AG04450 (cell line): ENCODE measurements at regions of chr6 and their contacts with region 1.

Region 1: DNA sequence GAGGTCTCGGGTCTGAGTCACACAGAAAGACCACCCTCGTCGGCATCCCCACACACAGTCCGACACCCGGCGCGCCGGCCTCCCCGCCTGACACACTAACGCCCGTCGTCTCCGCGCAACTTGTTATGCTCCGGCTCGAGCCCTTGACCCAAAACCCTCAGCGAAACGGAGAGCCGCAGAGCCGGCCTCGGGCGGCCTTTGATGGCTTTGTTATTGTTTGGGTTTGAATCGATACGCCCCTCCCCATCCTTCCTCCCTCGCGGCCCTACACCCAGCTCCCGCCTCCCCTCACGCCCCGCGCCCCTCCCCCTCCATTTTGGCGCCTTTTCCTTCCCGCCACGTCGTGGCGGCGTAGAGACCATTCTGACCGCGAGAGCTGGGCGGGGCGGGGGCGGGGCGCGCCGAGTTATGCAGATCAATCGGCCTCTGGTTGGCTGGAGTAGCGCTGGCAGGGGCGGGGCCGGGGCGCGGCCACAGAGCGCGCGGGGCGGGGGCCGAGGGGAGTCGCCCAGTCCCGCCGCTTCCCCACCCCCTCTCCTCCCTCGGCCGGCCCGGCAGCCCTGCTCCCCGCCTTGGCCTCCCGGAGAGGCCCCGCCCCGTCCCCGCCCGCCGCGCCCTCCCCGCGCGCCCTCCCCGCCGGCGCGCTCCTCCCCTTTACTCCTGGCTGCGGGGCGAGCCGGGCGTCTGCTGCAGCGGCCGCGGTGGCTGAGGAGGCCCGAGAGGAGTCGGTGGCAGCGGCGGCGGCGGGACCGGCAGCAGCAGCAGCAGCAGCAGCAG is at the start of gene PIM1:
- DNase-seq: peak; percentile 95
- H3K4me3 ChIP-seq: peak within 1 kb of the TSS; percentile 95
- H3K27ac ChIP-seq: peak within 1 kb of the TSS; percentile 99
- H3K27me3 ChIP-seq: no peaks in the 10 kb centered on the region
- CTCF ChIP-seq: no peak
- polyA plus RNA-seq, gene PIM1: 35.3 and 37.5 TPM in 2 replicates

Region 2: DNA sequence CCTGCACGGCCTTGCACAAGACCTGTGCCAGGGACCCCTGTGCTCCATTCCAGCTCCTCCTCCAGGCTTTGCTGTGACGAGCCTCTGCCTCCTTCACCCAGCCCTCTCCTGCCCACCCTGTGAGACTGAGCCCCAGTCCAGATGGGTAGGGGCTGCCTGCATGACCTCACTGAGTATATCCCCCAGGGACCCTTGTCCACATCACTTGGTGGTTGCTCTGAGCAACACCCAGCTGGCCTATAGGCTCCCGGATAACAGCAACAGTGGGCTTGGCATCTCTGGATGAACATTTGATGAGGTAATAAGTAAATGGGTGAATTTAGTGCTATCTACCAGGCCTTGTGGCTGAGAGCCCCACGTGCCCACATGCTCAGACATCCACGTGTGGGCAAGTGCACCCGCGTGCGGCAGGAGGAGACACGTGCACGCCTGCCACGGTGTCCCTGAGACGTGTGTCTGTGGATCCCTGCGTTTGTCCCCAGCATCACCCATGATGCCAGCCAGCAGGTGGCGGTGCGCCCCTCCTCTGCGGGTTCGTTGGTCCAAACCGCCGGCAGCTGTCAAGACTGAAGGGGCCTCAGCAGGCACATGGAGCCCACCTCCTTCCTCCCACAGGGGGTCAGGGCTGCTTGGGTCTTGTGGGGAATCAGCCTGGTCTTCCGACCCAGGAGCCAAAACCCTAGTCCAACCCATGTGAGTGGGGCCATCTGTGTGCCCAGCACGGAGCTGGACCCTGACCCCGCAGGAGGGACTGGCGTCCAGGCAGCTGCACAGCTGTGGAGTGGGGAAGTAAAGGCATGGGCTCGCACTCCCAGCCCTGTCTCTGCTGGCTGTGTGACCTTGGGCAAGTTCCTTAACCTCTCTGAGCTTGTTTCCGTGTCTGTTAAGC is 118.3 kb before region 1 on chr6:
- CTCF ChIA-PET with region 1: interaction called, 60 read pairs
- POLR2A ChIA-PET with region 1: interaction called, 20 read pairs
- DNase-seq: no peak
- H3K4me3 ChIP-seq: no peak overlapping the region
- H3K27ac ChIP-seq: no peak overlapping the region
- H3K27me3 ChIP-seq: no peaks in the 10 kb centered on the region
- CTCF ChIP-seq: peak; percentile 91

Region 3: DNA sequence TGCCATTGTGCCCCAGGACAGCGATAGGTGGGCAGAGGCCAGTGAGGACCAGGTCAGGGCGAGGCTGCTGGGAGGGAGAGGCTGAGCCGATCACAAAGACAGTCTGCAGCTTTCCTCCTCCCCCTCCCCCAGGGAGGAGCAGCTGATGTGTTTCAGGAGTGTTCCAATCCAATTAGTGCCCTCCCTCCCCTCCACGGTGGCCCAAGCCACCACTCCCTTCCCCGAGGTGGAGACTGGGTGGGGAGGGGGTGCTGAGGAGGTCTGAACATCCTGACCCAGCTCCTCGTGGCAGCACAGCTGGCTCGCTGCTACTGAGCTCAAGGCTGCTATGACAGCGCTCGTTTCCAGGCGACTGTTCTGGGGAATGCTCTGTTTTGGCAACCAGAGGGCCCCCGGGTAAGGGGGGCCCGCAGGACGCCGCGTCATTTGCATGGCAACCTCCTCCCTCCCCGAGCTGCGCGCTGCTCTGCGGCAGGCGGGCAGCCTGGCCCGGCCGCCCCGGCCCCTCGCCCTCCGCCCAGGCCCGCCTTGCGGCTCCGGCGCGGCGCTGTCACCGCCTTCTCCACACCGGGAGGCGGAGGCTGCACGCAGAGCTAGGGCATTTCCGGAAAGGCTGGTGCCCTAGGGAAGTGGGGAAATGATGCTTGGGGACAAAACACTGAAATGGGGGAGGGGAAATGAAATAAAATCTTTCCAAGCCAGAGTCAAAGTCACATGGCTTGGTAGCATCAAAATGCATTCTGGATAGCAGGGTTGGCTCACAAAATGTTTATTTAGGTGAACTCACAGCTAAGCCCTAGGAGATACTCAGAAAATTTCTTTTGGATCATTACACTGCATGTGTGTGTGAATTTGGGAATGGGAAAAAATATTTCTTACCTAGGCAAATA is 67.2 kb before region 1 on chr6:
- CTCF ChIA-PET with region 1: interaction called, 3 read pairs
- POLR2A ChIA-PET with region 1: interaction called, 10 read pairs
- DNase-seq: no peak
- H3K4me3 ChIP-seq: peak overlapping the region; percentile 53
- H3K27ac ChIP-seq: peak overlapping the region; percentile 65
- H3K27me3 ChIP-seq: no peaks in the 10 kb centered on the region
- CTCF ChIP-seq: no peak

Region 4: DNA sequence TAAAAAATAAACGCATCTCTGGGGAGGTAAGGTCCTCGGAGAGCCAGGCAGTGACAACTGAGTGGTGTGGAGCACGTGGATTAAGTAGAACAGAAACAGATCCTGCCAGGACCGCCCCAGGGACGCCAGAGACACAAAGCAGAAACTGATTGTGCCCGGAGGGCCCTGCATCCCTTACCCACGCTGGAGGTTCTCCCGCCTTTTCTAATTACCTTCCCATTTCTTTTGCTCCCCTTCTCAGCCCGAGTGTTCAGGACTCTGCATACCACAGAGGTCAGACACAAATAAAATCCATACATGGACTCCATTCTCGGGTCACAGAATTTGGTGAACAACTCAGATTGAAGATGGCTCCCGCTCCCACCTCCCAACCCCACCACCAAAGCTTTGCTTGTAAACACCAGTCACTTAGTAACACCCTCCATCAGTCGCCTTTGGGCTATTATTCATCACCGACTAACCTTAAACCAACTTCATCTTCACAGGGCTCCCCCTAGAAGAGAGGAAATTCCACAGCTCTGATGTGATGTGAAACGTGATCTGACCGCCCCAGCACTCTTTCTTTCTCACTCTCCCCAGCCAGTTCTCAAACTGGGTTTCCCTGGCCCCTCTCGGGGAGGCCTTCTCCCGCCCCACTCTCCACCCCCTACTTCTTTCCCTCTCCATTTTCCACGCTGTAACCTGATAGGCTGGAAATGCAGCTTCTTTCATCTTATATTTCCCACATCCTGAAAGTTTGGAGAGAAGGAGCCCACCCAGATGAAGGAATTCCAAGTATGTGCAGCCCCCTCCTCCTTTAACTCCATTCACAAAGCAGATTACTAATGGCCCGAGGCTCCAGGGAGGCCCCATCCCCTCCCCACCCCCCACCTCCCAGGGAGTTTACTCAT is 32.2 kb before region 1 on chr6:
- CTCF ChIA-PET with region 1: interaction called, 5 read pairs
- POLR2A ChIA-PET with region 1: interaction called, 12 read pairs
- DNase-seq: peak; percentile 93
- H3K4me3 ChIP-seq: peak overlapping the region; percentile 36
- H3K27ac ChIP-seq: peak overlapping the region; percentile 92
- H3K27me3 ChIP-seq: no peaks in the 10 kb centered on the region
- CTCF ChIP-seq: no peak

Region 5: GRCh38 chr6:37180075-37180474 is 10.4 kb after region 1 on chr6:
- CTCF ChIA-PET with region 1: no interaction called
- POLR2A ChIA-PET with region 1: no interaction called
- DNase-seq: no peak
- H3K4me3 ChIP-seq: no peak overlapping the region
- H3K27ac ChIP-seq: no peak overlapping the region
- H3K27me3 ChIP-seq: no peaks in the 10 kb centered on the region
- CTCF ChIP-seq: no peak

Region 6: GRCh38 chr6:37207903-37208456 is 38.3 kb after region 1 on chr6:
- CTCF ChIA-PET with region 1: interaction called, 43 read pairs
- POLR2A ChIA-PET with region 1: interaction called, 3 read pairs
- DNase-seq: peak; percentile 47
- H3K4me3 ChIP-seq: no peak overlapping the region
- H3K27ac ChIP-seq: no peak overlapping the region
- H3K27me3 ChIP-seq: no peaks in the 10 kb centered on the region
- CTCF ChIP-seq: peak; percentile 87

Region 7: GRCh38 chr6:37273690-37274089 is 104.0 kb after region 1 on chr6:
- CTCF ChIA-PET with region 1: no interaction called
- POLR2A ChIA-PET with region 1: no interaction called
- DNase-seq: no peak
- H3K4me3 ChIP-seq: no peak overlapping the region
- H3K27ac ChIP-seq: no peak overlapping the region
- H3K27me3 ChIP-seq: no peaks in the 10 kb centered on the region
- CTCF ChIP-seq: no peak

Region 8: DNA sequence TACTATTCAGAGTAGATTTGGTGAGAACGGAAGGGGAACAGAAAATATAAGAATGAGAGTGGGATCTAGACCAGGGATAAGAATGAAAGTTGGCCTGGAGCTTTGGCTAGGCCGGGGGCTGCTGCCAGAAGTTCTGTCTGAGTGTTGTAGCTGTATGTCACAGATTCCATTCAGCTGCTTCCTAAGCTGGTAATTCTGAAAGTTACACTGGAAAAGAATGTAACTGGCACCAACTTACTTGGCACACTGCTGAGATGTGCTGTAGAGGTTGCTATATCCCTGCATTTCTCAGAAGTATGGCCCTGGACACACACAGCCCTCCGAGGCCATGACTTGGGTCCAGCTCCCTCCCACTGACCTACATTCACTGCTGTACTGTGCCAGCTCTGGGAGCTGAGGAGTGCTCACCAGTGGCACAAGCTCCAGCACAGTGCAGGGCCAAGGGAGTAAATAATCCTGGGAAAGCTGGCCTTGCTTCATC is 114.0 kb after region 1 on chr6:
- CTCF ChIA-PET with region 1: no interaction called
- POLR2A ChIA-PET with region 1: no interaction called
- DNase-seq: no peak
- H3K4me3 ChIP-seq: no peak overlapping the region
- H3K27ac ChIP-seq: no peak overlapping the region
- H3K27me3 ChIP-seq: no peaks in the 10 kb centered on the region
- CTCF ChIP-seq: no peak